Caco-2 (cell line): ENCODE measurements at regions of chr1 and their contacts with region 1.

Region 1: DNA sequence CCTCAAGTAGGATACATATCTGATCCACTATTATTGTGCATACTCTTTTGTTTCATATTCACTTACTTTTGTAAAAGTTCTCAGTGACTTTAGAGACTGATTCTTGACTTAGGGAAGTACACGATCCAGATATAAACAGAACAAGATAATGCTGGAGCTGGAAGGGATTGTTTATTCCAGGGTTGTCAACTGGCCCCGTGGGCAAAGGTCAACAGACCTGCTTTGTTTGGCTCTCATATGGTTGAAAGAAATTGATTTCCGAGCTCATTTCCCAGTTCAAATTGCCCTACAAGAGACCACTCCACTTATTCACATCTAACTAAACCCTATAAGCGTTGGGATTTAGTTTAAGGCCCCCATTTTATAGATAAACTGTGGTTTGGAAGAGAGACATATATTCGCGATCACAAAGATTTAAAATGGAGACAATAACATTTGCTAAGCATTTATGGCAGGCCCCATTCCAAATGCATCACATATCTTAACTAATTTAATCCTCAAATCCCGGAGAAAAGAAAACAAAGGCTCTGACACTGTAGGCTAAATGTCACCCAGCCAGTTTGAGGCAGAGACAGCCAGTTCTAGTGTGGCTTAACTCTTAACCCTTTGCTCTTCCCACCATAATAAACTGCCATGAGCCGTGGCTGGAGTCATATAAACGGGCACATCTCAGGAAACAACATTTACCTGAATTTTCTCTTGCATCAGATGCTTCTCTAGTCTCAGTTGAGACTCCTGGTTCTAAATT is 20.6 kb downstream of the REG4 start:
- DNase-seq: no peak
- H3K4me3 ChIP-seq: no peak overlapping the region
- H3K4me3 Mint-ChIP-seq: peak overlapping the region; percentile 61
- H3K27ac Mint-ChIP-seq: peak overlapping the region; percentile 92
- H3K4me1 ChIP-seq: peaks cover 30% of the 10 kb centered on the region
- H3K4me1 Mint-ChIP-seq: peaks cover 31% of the 10 kb centered on the region
- H3K27me3 ChIP-seq: no peaks in the 10 kb centered on the region
- H3K27me3 Mint-ChIP-seq: no peaks in the 10 kb centered on the region
- CTCF ChIP-seq: no peak

Region 2: GRCh38 chr1:119773711-119774241 is 16.8 kb before region 1 on chr1:
- CTCF ChIA-PET with region 1: no interaction called
- POLR2A ChIA-PET with region 1: interaction called, 3 read pairs
- intact Hi-C with region 1: loop called (anchors 1 kb)
- DNase-seq: no peak
- H3K4me3 ChIP-seq: no peak overlapping the region
- H3K4me3 Mint-ChIP-seq: no peak overlapping the region
- H3K27ac Mint-ChIP-seq: no peak overlapping the region
- H3K4me1 ChIP-seq: peaks cover 70% of the 10 kb centered on the region
- H3K4me1 Mint-ChIP-seq: peaks cover 19% of the 10 kb centered on the region
- H3K27me3 ChIP-seq: no peaks in the 10 kb centered on the region
- H3K27me3 Mint-ChIP-seq: no peaks in the 10 kb centered on the region
- CTCF ChIP-seq: no peak

Region 3: GRCh38 chr1:119838236-119838635 is 47.6 kb after region 1 on chr1:
- CTCF ChIA-PET with region 1: no interaction called
- POLR2A ChIA-PET with region 1: no interaction called
- intact Hi-C with region 1: no loop called
- DNase-seq: no peak
- H3K4me3 ChIP-seq: no peak overlapping the region
- H3K4me3 Mint-ChIP-seq: no peak overlapping the region
- H3K27ac Mint-ChIP-seq: no peak overlapping the region
- H3K4me1 ChIP-seq: no peaks in the 10 kb centered on the region
- H3K4me1 Mint-ChIP-seq: no peaks in the 10 kb centered on the region
- H3K27me3 ChIP-seq: no peaks in the 10 kb centered on the region
- H3K27me3 Mint-ChIP-seq: no peaks in the 10 kb centered on the region
- CTCF ChIP-seq: no peak

Region 4: DNA sequence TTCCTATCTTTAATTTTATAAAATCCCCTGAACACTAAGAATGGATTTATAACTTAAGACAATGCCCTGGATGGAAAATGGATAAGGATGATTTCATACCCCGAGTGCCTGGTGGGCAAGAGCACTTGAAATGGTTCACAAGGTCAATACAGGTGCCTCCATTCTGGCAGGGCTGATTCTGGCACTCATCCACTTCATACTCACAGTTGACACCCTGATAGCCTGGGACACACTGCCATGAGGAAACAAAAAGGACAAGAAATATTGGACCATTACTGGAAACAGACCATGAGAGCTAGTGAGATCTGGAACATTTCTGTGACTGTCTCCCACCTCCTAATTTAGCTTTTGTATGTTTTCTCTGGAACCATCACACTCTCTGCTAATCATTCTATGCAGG is 144.7 kb after region 1 on chr1:
- CTCF ChIA-PET with region 1: no interaction called
- POLR2A ChIA-PET with region 1: no interaction called
- intact Hi-C with region 1: no loop called
- DNase-seq: no peak
- H3K4me3 ChIP-seq: no peak overlapping the region
- H3K4me3 Mint-ChIP-seq: no peak overlapping the region
- H3K27ac Mint-ChIP-seq: no peak overlapping the region
- H3K4me1 ChIP-seq: no peaks in the 10 kb centered on the region
- H3K4me1 Mint-ChIP-seq: no peaks in the 10 kb centered on the region
- H3K27me3 ChIP-seq: no peaks in the 10 kb centered on the region
- H3K27me3 Mint-ChIP-seq: no peaks in the 10 kb centered on the region
- CTCF ChIP-seq: no peak